Motor neuron (in vitro differentiated cells): ENCODE measurements at regions of chr16 and their contacts with region 1.

Region 1: DNA sequence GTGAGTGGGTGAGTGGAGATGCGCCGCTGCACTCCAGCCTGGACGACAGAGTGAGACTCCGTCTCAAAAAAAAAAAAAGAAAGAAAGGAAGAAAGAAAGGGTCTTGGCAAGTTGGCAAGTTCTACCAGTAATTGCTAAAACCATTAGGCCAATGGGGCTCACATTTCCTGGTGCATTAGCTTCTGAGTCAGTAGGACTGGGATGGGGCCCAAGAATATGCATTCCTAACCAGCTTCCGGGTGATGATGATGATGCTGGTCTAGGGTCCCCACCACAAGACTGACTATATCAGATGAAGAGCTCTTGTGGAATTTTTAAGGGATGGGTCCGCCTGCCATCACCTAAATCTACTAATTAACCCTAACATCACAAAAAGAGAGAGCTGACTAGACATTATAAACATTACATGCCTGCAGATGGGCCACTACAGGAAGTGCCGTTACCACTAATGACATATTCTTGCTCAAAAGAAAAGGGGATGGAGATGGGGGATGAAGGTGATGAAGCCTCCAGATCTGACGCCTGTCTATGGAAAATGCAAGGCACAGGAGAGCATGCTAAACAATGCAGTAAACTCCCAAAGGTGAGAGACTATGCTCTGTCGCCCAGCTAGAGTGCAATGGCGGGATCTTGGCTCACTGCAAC is 13.1 kb downstream of the MYH11 start:
- ATAC-seq: no peak
- H3K4me3 ChIP-seq: no peak overlapping the region
- H3K27ac ChIP-seq: no peak overlapping the region
- H3K4me1 ChIP-seq: no peaks in the 10 kb centered on the region

Region 2: GRCh38 chr16:15782573-15783365 is 61.0 kb before region 1 on chr16:
- in situ Hi-C with region 1: loop called in 1 of 9 experiments (anchors 10 kb)
- ATAC-seq: peak in 1 of 8 experiments; percentile 29
- H3K4me3 ChIP-seq: no peak overlapping the region
- H3K27ac ChIP-seq: no peak overlapping the region
- H3K4me1 ChIP-seq: no peaks in the 10 kb centered on the region

Region 3: DNA sequence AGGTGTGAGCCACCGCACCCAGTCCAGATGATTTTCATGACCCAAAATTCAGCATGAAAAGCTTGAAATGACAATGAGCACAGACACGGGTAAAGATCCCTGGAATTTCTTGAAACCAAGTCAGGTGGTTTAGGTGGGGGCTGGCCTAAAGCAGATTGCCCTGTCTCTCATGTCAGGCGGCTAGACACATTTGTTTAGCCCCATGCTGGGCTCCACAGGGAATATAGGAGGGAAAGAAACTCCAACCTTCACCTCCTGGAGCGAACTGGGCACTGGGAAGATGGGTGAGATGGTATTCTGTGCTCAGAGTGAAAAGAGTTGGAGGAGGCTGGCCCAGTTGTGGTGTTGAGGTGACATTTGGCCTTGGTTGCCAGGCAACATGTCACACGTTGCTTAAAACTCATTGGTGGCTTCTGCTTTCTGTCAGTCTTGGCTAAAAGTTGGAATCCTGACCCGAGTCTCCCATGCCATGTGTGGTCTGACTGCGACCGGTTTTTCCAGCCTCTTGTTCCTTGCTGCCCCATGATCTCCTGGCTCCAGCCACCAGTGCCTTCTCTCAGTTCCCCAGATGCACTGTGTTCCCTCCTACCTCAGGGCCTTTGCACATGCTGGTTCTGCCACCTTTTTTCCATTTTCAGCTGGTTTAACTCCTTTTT is 265.8 kb after region 1 on chr16:
- in situ Hi-C with region 1: no loop called
- ATAC-seq: no peak
- H3K4me3 ChIP-seq: no peak overlapping the region
- H3K27ac ChIP-seq: no peak overlapping the region
- H3K4me1 ChIP-seq: no peaks in the 10 kb centered on the region